ENCODE measurements at regions of chr12 and their contacts with region 1.

Region 1: DNA sequence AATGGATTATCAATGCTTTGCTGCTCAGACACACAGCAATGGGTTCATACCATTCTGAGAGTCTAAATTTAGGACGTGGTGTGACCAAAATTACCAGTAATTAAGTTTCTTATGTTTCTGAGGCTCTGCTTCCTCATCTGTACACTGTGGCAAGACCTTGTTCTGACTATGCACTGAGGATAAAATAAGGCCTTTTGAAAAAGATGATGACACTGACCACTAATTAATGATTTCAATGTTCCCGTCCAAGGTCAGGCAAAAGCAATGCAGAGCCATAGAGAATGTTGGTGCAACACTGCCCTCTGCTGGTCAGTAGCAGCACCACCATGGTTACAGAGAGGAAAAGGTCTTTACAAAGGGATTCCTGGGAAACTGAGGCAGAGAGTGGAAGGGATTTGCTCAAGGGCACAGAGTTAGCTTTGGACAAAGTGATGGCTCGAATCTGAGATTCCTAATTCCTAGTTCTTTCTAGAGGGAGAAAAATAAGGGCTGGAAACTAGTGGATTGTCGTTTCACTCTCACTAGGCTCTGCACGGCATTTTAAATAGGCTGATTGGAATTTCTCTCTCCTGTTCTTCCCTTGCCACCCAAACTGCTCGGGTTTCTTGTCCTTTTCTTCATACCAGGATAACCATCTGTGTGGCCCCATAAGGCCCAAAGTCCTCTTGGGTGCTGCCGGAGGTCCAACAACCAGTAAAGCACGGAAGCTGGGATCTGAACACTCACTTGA is 22.3 kb upstream of the P2RX7 start:
- DNase-seq: peak; percentile 31
- ATAC-seq: peak; percentile 89
- H3K4me3 Mint-ChIP-seq: no peak overlapping the region
- H3K27ac Mint-ChIP-seq: no peak overlapping the region
- H3K4me1 Mint-ChIP-seq: peaks cover 4% of the 10 kb centered on the region
- H3K27me3 Mint-ChIP-seq: no peaks in the 10 kb centered on the region
- CTCF ChIP-seq: peak; percentile 50

Region 2: DNA sequence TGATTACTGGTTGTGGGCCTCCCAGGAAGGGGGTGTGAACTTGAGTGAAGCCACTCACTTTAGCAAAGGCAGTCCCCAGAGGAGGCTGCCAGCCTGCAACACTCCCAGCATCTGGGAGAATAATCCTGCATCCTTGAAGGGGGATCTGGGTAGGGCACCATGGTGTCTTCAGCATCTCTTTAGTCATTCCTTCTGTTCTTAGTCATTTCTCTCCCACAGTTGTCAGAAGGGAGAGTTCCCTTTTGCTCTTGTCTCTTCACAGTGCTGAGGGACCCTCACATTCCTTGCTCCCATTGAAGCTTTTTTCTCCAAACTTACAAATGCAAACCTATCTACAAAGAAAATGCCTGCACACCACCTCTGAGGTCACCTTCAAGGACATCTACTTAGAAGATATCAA is 1185.1 kb before region 1 on chr12:
- CTCF ChIA-PET with region 1: no interaction called
- POLR2A ChIA-PET with region 1: no interaction called
- intact Hi-C with region 1: no loop called
- DNase-seq: no peak
- ATAC-seq: no peak
- H3K4me3 Mint-ChIP-seq: no peak overlapping the region
- H3K27ac Mint-ChIP-seq: no peak overlapping the region
- H3K4me1 Mint-ChIP-seq: no peaks in the 10 kb centered on the region
- H3K27me3 Mint-ChIP-seq: peaks cover 2% of the 10 kb centered on the region
- CTCF ChIP-seq: no peak

Region 3: DNA sequence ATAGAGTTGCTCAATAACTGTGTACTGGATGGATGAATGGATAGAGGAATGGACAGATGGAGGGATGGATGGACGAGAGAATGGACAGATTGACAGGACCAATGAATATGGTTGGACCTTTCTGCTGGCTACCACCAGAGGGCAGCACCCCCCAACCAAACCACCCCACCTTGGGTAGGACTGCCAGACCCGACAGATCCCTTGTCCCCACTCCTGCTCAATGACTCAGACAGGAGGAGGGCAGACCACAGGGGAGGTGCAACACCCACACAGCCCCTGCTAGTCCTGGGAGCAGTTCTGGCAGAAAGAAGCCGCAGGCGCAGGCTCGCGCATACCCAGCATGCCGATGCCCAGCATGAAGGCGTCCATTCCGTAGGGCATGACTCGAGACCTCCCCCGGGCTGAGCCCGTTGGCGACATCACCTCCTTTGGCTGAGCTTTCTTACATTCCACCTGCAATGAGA is 753.8 kb before region 1 on chr12:
- CTCF ChIA-PET with region 1: no interaction called
- POLR2A ChIA-PET with region 1: no interaction called
- intact Hi-C with region 1: loop called (anchors 1 kb)
- DNase-seq: peak; percentile 59
- ATAC-seq: peak; percentile 91
- H3K4me3 Mint-ChIP-seq: no peak overlapping the region
- H3K27ac Mint-ChIP-seq: no peak overlapping the region
- H3K4me1 Mint-ChIP-seq: peaks cover 3% of the 10 kb centered on the region
- H3K27me3 Mint-ChIP-seq: peaks cover 26% of the 10 kb centered on the region
- CTCF ChIP-seq: peak; percentile 22

Region 4: DNA sequence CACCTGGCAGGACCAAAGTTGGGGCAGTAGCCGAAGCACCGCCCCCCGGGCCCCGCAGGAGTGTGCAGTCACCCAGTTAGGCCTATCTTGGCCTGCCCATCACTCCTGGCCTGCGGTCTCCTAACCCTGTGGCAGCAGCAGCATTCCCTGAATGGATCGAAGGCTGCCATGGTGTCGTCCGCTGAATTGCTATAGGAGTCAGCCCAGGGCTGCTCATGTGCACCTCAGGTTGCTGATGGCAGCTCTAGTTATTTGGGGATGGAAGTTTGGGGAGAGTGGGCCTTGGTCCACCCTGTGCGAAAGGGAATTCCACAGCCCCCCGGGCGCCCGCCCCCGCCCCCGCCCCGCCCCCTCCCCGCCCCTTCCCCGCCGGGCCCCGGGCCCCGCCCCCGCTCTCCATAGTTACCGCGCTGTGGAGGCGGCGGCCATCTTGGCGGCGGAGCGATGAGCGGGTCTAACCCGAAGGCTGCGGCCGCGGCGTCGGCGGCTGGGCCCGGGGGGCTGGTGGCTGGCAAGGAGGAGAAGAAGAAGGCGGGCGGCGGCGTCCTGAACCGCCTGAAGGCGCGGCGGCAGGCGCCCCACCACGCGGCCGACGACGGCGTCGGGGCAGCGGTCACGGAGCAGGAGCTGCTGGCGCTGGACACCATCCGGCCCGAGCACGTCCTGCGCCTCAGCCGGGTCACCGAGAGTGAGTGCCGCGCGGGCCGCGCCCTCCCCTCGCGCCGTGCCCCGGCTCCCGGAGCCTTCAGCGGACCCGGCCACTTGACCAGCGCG is 400.2 kb before region 1 on chr12 and contains the start of gene UNC119B:
- CTCF ChIA-PET with region 1: no interaction called
- POLR2A ChIA-PET with region 1: no interaction called
- intact Hi-C with region 1: loop called (anchors 5 kb)
- DNase-seq: peak; percentile 71
- ATAC-seq: peak; percentile 92
- H3K4me3 Mint-ChIP-seq: peak within 1 kb of the TSS; percentile 89
- H3K27ac Mint-ChIP-seq: peak within 1 kb of the TSS; percentile 82
- H3K4me1 Mint-ChIP-seq: peaks cover 29% of the 10 kb centered on the region
- H3K27me3 Mint-ChIP-seq: no peaks in the 10 kb centered on the region
- CTCF ChIP-seq: no peak
- total RNA-seq, gene UNC119B: 17.3 and 18.5 TPM in 2 replicates

Region 5: DNA sequence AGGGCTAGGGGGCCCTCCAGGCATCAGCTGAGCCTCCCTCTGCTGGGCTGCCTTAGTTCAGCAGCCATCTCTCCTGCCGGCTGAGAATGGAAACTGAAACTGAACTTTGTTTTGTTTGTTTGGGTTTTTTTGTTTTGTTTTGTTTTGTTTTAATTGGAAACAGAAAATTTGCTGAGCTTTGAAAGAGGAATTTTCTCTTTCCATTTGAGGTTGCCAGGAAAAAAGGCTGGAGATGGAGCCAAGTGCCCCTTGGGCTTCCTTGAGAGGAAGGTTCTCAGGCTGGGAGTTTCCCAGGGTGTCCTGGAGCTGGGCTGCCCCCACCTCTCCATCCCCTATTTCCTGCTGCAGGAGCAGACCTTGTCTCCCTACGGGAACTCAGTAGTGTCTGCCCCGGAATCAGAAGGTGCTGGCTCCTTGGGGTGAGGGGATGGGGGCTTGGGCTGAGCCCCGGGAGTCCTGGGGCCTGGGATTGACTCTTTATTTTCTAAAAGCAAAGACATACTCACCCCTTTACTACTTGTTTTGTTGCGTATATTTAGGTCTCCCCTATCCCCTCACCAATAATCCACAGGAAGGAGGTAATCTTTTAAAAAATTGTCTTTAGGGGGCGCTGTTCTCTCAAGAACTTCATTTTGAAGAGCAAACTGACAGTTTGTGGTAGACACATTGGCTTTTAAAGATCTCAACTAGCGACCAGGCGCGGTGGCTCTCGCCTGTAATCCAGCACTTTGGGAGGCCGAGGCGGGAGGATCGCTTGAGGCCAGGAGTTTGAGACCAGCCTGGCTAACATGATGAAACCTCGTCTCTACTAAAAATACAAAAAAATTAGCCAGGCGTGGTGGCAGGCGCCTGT is 50.0 kb before region 1 on chr12:
- CTCF ChIA-PET with region 1: interaction called, 3 read pairs
- POLR2A ChIA-PET with region 1: interaction called, 3 read pairs
- intact Hi-C with region 1: loop called (anchors 1 kb)
- DNase-seq: peak; percentile 26
- ATAC-seq: peak; percentile 94
- H3K4me3 Mint-ChIP-seq: peak overlapping the region; percentile 83
- H3K27ac Mint-ChIP-seq: peak overlapping the region; percentile 82
- H3K4me1 Mint-ChIP-seq: peaks cover 11% of the 10 kb centered on the region
- H3K27me3 Mint-ChIP-seq: no peaks in the 10 kb centered on the region
- CTCF ChIP-seq: peak; percentile 44

Region 6: GRCh38 chr12:121223292-121224285 is 113.2 kb after region 1 on chr12:
- CTCF ChIA-PET with region 1: no interaction called
- POLR2A ChIA-PET with region 1: no interaction called
- intact Hi-C with region 1: loop called (anchors 1 kb)
- DNase-seq: no peak
- ATAC-seq: peak; percentile 39
- H3K4me3 Mint-ChIP-seq: no peak overlapping the region
- H3K27ac Mint-ChIP-seq: peak overlapping the region; percentile 83
- H3K4me1 Mint-ChIP-seq: peaks cover 34% of the 10 kb centered on the region
- H3K27me3 Mint-ChIP-seq: no peaks in the 10 kb centered on the region
- CTCF ChIP-seq: no peak